Heart left ventricle (tissue), 16 donors: ENCODE measurements at regions of chr12 and their contacts with region 1.

Region 1: DNA sequence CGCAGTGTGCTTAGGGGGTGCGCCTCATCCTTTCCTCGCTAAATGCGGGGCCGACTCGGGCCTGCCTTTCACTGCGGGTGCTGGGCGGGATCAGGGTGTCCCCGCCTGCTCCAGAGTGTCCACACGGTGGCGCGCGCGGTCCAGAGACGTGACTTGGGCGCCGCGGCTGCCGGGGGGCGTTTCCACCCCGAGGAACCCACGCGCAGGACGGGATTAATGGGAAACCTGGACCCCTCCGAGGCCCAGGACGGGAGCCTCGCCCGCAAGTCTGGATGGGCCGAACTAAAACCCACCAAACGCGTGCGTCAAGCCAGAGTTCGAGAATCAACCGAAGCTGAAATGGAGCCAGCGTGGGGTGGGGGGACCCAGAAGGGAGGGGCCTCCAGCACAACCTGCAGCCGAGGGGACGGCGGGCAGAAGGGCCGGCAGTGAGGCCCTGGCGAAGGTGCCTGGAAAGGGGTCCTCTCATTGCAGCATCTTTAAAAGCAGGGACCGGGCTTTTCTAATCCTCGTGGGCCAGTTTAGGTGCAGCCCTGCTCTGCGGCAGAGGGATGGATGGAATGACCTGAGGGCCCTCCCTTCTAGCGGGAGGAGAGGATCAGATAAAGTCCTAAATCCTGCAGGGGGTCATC is 93.3 kb downstream of the NINJ2 start:
- DNase-seq: peak; percentile 86 to 94 (median 90)
- ATAC-seq: peak; percentile 57 to 77 (median 69)
- H3K4me3 ChIP-seq: peak overlapping the region; percentile 44 to 74 (median 65)
- H3K27ac ChIP-seq: peak overlapping the region; percentile 91 to 99 (median 95)
- H3K4me1 ChIP-seq: peaks cover 5 to 41% (median 34%) of the 10 kb centered on the region in 12 donors
- H3K27me3 ChIP-seq: no peaks in the 10 kb centered on the region
- CTCF ChIP-seq: peak; percentile 90 to 98 (median 96)
- POLR2A ChIP-seq: no peak

Region 2: DNA sequence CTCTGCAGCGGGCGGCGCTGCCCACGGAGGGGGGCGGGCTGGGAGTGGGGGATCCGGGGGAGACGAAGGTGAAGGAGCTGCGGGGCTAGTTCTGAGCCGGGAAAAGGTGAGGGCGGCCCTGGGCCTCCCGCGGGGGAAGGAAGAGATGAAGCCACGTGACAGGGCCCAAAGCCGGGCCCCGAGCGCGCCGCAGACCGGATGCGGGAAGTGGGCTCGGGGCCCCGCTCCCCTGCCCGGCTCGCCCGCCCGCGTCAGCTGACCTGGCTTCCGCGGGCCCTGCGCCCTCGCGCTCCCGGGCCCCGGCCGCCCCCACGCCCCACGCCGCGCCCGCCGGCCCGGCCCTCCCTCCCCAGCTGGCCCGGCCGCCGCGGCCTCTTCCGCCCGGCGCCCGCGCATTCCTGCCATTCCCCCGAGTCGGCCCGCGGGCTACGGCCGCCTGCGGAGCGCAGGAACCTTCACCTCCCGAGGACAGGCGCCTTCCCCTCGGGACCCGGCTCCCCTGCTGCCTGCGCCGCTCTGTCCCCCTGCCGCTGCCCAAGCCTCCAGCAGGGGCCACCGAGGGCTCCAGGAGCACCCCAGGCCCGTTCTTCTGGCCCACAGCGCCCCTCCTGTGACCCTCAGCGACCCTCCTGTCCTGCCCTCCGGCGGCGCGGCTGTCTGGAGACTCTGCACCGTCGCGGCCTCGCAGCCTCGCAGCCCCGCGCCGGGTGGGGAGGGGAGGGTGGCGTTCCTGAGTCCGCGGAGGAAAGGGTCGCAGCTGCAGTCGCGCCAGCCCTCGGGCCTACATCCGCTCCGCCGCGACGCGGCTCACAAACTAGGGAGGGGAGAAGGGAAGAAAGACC is 72.9 kb after region 1 on chr12:
- intact Hi-C with region 1: loop called in 8 of 10 experiments (anchors 2 to 10 kb)
- DNase-seq: peak; percentile 83 to 93 (median 88)
- ATAC-seq: peak; percentile 9 to 78 (median 66)
- H3K4me3 ChIP-seq: peak overlapping the region; percentile 43 to 86 (median 74)
- H3K27ac ChIP-seq: peak overlapping the region; percentile 93 to 100 (median 99)
- H3K4me1 ChIP-seq: peaks cover 7 to 91% (median 54%) of the 10 kb centered on the region in 12 donors
- H3K27me3 ChIP-seq: no peaks in the 10 kb centered on the region
- CTCF ChIP-seq: peak in 11 of 12 donors; percentile 9 to 51 (median 34)
- POLR2A ChIP-seq: peak in 1 of 2 donors; percentile 28

Region 3: GRCh38 chr12:817941-818600 is 248.2 kb after region 1 on chr12:
- intact Hi-C with region 1: loop called in 9 of 10 experiments (anchors 2 to 5 kb)
- DNase-seq: no peak
- ATAC-seq: no peak
- H3K4me3 ChIP-seq: no peak overlapping the region
- H3K27ac ChIP-seq: peak overlapping the region in 2 of 12 donors; percentile 8 to 44
- H3K4me1 ChIP-seq: peaks cover 0 to 30% (median 19%) of the 10 kb centered on the region in 12 donors
- H3K27me3 ChIP-seq: no peaks in the 10 kb centered on the region
- CTCF ChIP-seq: no peak
- POLR2A ChIP-seq: no peak

Region 4: DNA sequence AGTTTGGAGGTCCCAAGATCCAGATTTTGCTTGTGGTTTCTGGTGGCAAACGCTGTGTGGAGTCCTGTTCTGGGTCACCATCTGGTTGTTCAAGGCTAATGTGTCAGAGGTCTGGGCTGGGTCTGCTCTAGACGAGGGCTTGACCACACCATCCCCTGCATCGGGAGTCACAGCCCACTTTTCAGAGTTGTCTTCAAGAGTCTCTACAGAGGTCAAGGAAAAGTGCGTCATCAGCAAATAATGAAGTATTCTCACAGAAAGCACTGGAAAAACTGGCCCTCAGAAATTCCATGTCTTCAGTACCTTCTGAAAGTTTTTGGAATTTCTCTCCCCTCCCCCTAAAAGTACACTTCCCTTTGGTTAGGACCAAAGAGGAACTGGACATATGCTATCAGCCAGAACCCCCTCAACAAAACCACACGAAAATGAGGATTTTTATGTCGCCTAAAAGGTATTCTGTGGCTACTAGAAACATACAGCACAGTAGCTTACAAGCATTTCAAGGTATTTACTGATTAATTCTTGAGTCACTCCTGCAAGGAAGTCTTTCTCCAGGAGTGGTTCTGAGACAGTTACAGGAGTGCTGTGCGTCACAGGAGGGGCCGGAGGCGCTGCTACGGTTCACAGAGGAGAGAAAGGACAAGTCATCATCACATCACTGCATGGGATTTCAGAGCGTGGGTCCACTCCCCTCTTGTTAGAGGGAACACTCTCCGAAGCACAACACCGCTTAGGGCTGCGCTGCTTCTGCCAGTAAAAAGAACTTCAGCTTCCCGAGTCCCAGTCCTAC is 344.2 kb after region 1 on chr12:
- intact Hi-C with region 1: no loop called
- DNase-seq: no peak
- ATAC-seq: peak in 1 of 4 donors; percentile 12
- H3K4me3 ChIP-seq: no peak overlapping the region
- H3K27ac ChIP-seq: no peak overlapping the region
- H3K4me1 ChIP-seq: peaks cover 6 to 42% (median 21%) of the 10 kb centered on the region in 12 donors
- H3K27me3 ChIP-seq: no peaks in the 10 kb centered on the region
- CTCF ChIP-seq: no peak
- POLR2A ChIP-seq: no peak

Region 5: DNA sequence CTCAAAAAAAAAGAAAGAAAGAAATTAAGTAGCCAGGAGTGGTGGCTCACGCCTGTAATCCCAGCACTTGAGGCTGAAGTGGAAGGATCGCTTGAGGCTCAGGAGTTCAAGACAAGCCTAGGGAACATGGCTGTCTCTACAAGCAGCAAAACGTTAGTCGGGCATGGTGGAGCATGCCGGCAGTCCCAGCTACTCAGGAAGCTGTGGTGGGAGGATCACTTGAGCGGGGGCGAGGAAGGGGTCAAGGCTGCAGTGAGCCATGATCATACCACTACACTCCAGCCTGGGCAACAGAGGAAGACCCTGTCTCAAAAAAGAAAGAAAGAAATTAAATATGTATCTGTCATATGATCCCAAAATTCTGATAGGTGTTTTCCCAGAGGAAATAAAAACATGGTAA is 374.3 kb after region 1 on chr12:
- intact Hi-C with region 1: loop called in 7 of 10 experiments (anchors 1 to 5 kb)
- DNase-seq: no peak
- ATAC-seq: no peak
- H3K4me3 ChIP-seq: no peak overlapping the region
- H3K27ac ChIP-seq: no peak overlapping the region
- H3K4me1 ChIP-seq: peaks cover 0 to 21% (median 13%) of the 10 kb centered on the region in 12 donors
- H3K27me3 ChIP-seq: no peaks in the 10 kb centered on the region
- CTCF ChIP-seq: no peak
- POLR2A ChIP-seq: no peak

Region 6: DNA sequence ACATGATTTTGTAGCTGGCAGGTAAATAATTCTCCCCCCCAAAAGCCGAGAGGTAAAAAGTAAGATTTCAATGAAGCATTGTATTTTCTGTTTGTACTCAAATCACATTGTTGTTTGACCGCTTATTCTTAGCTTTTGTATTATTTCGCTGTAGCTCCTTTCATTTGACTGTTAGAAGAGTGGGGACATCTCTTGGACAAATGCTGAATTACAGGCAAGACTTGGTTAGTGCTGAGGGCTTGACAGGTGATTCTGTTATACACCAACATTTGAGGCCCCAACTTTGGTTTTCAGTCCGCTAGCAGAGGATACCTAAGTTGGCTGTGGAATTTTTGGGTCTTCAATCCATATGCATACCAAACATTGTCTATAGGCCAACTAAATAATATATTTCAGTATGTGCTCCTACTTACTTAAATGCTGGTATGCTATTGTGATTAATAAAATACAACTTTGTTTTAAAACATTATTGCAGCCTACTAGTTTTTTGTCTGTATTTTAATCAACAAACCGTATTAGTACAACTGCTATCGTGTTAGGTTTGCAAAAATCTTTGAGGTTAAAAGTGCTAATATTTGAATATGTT is 523.3 kb after region 1 on chr12:
- intact Hi-C with region 1: loop called in 8 of 10 experiments (anchors 5 to 10 kb)
- DNase-seq: peak in 1 of 5 donors; percentile 16
- ATAC-seq: peak in 3 of 4 donors; percentile 63 to 69 (median 67)
- H3K4me3 ChIP-seq: no peak overlapping the region
- H3K27ac ChIP-seq: no peak overlapping the region
- H3K4me1 ChIP-seq: peaks cover 0 to 17% (median 4%) of the 10 kb centered on the region in 12 donors
- H3K27me3 ChIP-seq: no peaks in the 10 kb centered on the region
- CTCF ChIP-seq: peak; percentile 54 to 80 (median 74)
- POLR2A ChIP-seq: no peak

Region 7: DNA sequence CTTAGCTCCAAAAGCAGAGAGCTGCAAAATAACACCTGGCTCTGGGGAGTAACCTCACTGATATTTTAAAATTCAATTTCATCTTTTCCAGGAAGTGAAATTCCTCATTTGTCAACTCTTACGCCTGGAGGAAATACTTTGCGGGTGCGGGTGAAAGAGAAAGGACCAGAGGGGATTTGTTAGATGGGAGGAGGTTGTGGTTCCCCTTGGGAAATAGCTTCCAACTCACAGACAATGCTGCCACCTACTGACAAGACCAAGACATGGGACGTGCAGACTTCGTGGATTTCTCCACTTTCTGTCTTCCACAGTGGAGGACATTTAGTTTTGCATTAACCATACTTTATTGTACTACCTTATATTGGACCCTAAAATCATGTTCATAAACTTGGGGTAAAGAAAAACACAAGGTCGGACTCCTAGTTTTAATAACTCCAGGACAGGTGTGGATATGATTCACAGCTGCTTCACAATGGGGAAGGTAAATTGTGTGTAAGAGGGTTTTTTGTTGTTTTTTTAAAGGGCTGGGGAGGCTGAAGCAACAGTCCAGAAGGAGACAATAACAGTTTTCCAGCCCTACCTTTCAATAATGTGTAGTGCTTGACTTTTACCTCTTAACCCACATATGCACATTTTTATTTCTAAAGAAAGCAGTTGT is 1013.6 kb after region 1 on chr12:
- intact Hi-C with region 1: loop called in 2 of 10 experiments (anchors 5 to 10 kb)
- DNase-seq: peak in 3 of 5 donors; percentile 58 to 71 (median 71)
- ATAC-seq: peak; percentile 50 to 83 (median 80)
- H3K4me3 ChIP-seq: peak overlapping the region in 9 of 12 donors; percentile 12 to 43 (median 26)
- H3K27ac ChIP-seq: no peak overlapping the region
- H3K4me1 ChIP-seq: peaks cover 0 to 39% (median 15%) of the 10 kb centered on the region in 12 donors
- H3K27me3 ChIP-seq: no peaks in the 10 kb centered on the region
- CTCF ChIP-seq: peak; percentile 73 to 96 (median 88)
- POLR2A ChIP-seq: no peak